OCI-LY7 (cell line): ENCODE measurements at regions of chr2 and their contacts with region 1.

Region 1: GRCh38 chr2:85288244-85288725 is 39.5 kb downstream of the TGOLN2 start:
- DNase-seq: no peak
- H3K4me3 ChIP-seq: no peak overlapping the region
- H3K27ac ChIP-seq: no peak overlapping the region
- H3K4me1 ChIP-seq: no peaks in the 10 kb centered on the region
- CTCF ChIP-seq: no peak

Region 2: DNA sequence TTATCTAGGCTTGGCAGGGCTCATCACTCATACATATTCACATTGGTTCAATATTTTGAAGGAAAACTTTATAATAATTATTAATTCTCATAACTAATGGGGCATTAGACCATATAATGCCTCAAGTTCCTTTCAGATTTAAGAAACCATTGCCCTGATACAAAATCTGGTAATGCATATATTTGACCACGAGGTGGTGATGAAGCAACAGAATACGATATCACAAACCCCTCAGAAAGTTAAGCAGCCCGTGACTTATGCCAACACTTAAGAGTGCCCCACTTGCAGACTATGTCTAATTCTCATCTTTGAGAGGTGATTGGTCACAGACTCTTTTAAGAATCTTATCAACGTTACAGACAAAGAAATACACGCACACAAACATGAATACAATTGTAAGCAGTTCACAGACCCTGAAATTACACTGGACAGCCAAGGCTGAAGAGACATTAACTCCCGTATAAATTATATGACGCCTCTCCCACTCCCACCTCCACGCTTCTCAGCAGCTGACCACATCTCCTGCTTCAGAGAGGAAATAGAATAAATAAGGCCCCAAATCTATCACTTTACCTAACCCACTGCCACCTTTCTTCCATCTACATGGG is 792.6 kb before region 1 on chr2:
- CTCF ChIA-PET with region 1: no interaction called
- POLR2A ChIA-PET with region 1: no interaction called
- intact Hi-C with region 1: loop called (anchors 10 kb)
- DNase-seq: peak; percentile 69
- H3K4me3 ChIP-seq: no peak overlapping the region
- H3K27ac ChIP-seq: no peak overlapping the region
- H3K4me1 ChIP-seq: no peaks in the 10 kb centered on the region
- CTCF ChIP-seq: peak; percentile 87

Region 3: GRCh38 chr2:85066874-85067351 is 221.4 kb before region 1 on chr2:
- CTCF ChIA-PET with region 1: no interaction called
- POLR2A ChIA-PET with region 1: no interaction called
- intact Hi-C with region 1: loop called (anchors 1 kb)
- DNase-seq: peak; percentile 54
- H3K4me3 ChIP-seq: no peak overlapping the region
- H3K27ac ChIP-seq: no peak overlapping the region
- H3K4me1 ChIP-seq: no peaks in the 10 kb centered on the region
- CTCF ChIP-seq: peak; percentile 81

Region 4: DNA sequence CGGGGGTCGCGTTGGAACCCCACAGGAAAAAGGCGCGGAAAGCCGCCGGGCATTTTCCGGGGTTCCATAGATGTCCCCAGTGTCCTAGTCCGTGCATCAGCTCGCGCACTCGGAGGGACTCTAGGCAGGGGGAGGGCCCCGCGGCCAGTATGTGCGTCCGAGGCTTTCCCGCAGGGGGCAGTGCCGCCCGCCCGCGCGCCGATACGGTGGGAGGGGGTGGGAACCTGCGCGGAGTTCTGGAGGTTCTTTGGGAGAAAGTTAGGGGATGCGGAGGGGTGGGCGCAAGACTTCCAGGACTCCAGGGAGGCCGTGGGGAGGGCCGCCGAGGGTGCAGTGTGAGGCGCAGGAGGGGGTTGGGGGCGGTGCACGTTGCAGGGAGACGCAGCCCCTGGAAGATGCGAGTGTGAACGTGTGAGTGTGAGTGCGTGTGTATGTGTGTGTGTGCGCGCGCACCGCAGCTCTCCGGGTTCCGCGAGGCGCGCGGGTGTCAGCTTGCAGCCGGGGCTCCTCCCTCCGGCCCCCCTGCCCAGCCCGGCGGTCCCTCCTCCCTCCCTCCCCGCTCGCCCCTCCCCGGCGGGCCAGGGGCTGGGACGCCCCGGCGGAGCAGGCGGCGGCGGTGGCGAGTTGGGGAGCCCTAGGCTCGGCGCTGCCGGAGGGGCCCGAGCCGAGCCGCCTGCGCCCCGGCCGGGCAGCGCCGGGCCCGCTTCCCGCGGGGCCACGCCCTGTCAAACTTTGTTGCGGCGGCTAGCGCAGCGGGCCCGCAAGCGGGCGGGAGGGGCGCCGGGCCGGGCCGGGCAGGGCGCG is 155.2 kb before region 1 on chr2 and contains the start of gene TCF7L1:
- CTCF ChIA-PET with region 1: no interaction called
- POLR2A ChIA-PET with region 1: no interaction called
- intact Hi-C with region 1: loop called (anchors 10 kb)
- DNase-seq: no peak
- H3K4me3 ChIP-seq: no peak within 1 kb of the TSS
- H3K27ac ChIP-seq: no peak within 1 kb of the TSS
- H3K4me1 ChIP-seq: no peaks in the 10 kb centered on the region
- CTCF ChIP-seq: 0 out of 2 replicates have a peak, but pooled peaks have one; percentile 32
- total RNA-seq, gene TCF7L1: not detected in 2 replicates

Region 5: GRCh38 chr2:85266146-85267041 is 21.9 kb before region 1 on chr2:
- CTCF ChIA-PET with region 1: no interaction called
- POLR2A ChIA-PET with region 1: no interaction called
- intact Hi-C with region 1: loop called (anchors 2 kb)
- DNase-seq: peak; percentile 78
- H3K4me3 ChIP-seq: no peak overlapping the region
- H3K27ac ChIP-seq: no peak overlapping the region
- H3K4me1 ChIP-seq: no peaks in the 10 kb centered on the region
- CTCF ChIP-seq: peak; percentile 99

Region 6: GRCh38 chr2:85277416-85278158 is 10.7 kb before region 1 on chr2:
- CTCF ChIA-PET with region 1: no interaction called
- POLR2A ChIA-PET with region 1: no interaction called
- intact Hi-C with region 1: no loop called
- DNase-seq: no peak
- H3K4me3 ChIP-seq: no peak overlapping the region
- H3K27ac ChIP-seq: no peak overlapping the region
- H3K4me1 ChIP-seq: no peaks in the 10 kb centered on the region
- CTCF ChIP-seq: no peak

Region 7: DNA sequence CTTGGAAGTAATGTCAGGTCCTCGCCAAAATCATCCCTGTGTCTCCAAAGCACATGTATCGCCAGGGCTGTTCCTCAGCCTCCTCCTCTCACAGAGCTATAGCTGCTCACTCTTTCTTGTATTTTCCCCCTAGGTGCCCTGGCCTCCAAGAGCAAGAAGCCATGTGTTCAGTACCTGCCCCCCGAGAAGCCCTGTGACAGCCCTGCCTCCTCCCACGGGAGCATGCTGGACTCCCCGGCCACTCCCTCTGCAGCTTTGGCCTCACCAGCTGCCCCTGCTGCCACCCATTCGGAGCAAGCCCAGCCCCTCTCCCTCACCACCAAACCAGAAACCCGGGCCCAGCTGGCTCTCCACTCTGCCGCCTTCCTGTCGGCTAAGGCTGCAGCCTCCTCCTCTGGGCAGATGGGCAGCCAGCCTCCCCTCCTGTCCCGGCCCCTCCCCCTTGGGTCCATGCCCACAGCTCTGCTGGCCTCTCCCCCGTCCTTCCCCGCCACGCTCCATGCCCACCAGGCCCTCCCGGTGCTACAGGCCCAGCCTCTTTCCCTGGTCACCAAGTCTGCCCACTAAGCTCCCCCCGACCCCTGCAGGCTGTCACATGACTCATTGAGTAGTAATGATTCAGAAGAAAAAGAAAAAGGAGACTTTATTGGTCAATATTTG is 20.7 kb after region 1 on chr2:
- CTCF ChIA-PET with region 1: no interaction called
- POLR2A ChIA-PET with region 1: no interaction called
- intact Hi-C with region 1: no loop called
- DNase-seq: no peak
- H3K4me3 ChIP-seq: no peak overlapping the region
- H3K27ac ChIP-seq: no peak overlapping the region
- H3K4me1 ChIP-seq: peaks cover 13% of the 10 kb centered on the region
- CTCF ChIP-seq: no peak

Region 8: GRCh38 chr2:85750587-85751575 is 462.6 kb after region 1 on chr2:
- CTCF ChIA-PET with region 1: no interaction called
- POLR2A ChIA-PET with region 1: no interaction called
- intact Hi-C with region 1: no loop called
- DNase-seq: peak; percentile 58
- H3K4me3 ChIP-seq: no peak overlapping the region
- H3K27ac ChIP-seq: no peak overlapping the region
- H3K4me1 ChIP-seq: peaks cover 9% of the 10 kb centered on the region
- CTCF ChIP-seq: peak; percentile 87

Region 9: DNA sequence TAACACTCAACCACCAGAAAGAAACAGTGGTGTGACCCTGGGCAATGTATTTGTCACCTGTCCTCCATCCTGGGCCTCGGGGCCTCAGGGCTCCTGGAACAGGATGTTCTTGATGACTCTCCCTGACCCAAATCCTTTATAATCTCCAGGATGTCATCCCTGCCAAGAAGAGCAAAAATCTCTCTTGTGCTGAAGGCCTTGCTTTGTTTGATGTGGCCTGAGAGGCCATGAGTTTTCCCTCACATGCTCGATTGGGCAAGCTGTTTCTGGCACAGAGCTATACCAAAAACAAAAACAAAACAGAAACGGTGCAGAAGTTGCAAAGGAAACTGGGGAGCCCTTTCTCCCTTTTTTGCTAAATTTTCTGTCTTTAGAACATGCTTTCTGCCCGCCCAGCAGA is 636.2 kb after region 1 on chr2:
- CTCF ChIA-PET with region 1: no interaction called
- POLR2A ChIA-PET with region 1: no interaction called
- intact Hi-C with region 1: no loop called
- DNase-seq: no peak
- H3K4me3 ChIP-seq: no peak overlapping the region
- H3K27ac ChIP-seq: no peak overlapping the region
- H3K4me1 ChIP-seq: no peaks in the 10 kb centered on the region
- CTCF ChIP-seq: no peak